ENCODE measurements at regions of chr4 and their contacts with region 1.

Region 1: DNA sequence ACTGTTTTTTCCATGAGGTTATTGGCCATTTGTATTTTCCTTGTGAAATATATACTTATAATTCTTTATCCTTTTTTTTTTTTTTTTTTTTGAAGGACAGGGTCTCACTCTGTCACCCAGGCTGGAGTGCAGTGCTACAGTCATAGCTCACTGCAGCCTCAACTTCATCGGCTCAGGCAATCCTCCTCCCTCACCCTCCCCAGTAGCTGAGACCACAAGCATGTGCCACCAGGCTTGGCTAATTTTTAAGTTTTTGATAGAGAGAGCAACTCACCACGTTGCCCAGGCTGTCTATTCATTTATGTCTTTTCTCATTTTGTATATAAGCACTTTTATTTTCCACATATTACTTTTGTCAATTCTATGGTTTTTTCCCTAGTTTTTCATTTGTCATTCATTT is 16.8 kb downstream of the RBPJ start:
- DNase-seq: no peak
- H3K4me3 ChIP-seq: no peak overlapping the region
- CTCF ChIP-seq: no peak
- POLR2A ChIP-seq: no peak

Region 2: GRCh38 chr4:24456431-24456830 is 1881.2 kb before region 1 on chr4:
- intact Hi-C with region 1: loop called (anchors 5 kb)
- DNase-seq: no peak
- H3K4me3 ChIP-seq: no peak overlapping the region
- CTCF ChIP-seq: no peak
- POLR2A ChIP-seq: no peak

Region 3: DNA sequence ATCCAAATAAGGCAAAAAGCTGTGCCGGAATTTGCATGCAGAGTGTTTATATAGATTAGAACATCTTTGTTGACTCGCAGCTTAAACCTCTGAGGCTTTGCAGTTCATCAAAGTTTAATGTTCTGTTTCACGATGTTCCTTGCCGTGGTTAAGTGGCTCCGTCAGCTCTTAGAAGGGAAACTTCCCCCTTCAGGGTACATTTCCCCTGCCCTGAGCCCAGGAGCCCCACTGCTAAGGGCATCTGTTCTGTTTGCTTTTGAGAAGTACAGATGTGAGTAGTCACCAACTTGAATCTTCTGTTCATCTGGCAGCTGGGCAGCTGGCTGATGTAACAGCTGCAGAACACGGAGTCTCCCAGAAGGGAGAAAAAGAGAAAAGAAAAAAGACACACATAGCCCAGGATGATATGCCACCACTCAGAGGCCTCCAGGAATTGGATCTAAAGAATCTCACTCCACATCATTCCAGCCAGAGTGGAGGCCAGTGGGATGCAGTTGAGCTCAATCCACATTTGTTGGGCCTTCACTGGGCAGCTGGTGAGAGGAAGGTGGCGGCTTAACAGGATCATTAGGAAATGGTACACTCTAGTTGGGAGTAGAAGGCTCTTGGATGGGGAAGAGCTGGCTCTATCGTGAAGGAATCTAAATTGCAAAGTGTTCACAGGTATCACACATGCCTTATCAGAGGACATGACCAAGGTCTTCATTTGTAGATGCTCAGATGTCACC is 195.5 kb before region 1 on chr4:
- intact Hi-C with region 1: no loop called
- DNase-seq: peak; percentile 50 to 88
- H3K4me3 ChIP-seq: no peak overlapping the region
- CTCF ChIP-seq: no peak
- POLR2A ChIP-seq: no peak